K562 (cell line): ENCODE measurements at regions of chr10 and their contacts with region 1.

Region 1: DNA sequence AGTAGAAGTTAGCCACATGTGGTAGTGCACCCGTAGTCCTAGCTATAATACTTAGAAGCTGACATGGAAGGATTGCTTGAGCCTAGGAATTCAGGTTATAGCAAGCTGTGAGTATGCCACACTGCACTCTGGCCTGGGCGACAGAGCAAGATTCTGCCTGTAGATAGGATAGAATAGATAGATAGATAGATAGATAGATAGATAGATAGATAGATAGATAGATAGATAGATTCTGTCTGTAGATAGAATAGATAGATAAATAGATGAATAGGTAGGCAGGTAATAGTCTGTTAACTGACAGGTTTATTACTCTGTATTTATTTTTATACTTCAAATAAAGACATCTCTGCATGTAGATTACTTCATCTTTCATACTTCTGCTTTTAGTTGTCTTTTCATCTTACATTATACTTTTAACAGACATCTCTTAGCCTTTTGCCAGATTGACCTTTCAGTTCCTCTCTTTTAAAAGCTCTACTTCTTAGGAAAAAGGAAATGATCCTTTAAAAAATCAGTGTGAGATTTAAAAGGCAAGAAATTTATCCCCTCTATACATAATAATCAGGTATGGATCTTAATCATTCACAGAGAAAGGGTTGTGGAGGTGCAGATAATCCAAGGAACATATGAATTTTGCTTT is 31.8 kb downstream of the CCAR1 start:
- DNase-seq: no peak
- ATAC-seq: no peak
- H3K4me3 ChIP-seq: no peak overlapping the region
- H3K27ac ChIP-seq: no peak overlapping the region
- H3K4me1 ChIP-seq: no peaks in the 10 kb centered on the region
- H3K27me3 ChIP-seq: no peaks in the 10 kb centered on the region
- CTCF ChIP-seq: no peak
- EP300 ChIP-seq: no peak
- POLR2A ChIP-seq: no peak
- RAD21 ChIP-seq: no peak

Region 2: GRCh38 chr10:68973975-68974374 is 221.1 kb after region 1 on chr10:
- CTCF ChIA-PET with region 1: no interaction called
- POLR2A ChIA-PET with region 1: no interaction called
- in situ Hi-C with region 1: no loop called
- intact Hi-C with region 1: loop called (anchors 10 kb)
- DNase-seq: no peak
- ATAC-seq: no peak
- H3K4me3 ChIP-seq: no peak overlapping the region
- H3K27ac ChIP-seq: no peak overlapping the region
- H3K4me1 ChIP-seq: no peaks in the 10 kb centered on the region
- H3K27me3 ChIP-seq: no peaks in the 10 kb centered on the region
- CTCF ChIP-seq: no peak
- EP300 ChIP-seq: no peak
- POLR2A ChIP-seq: 0 out of 2 replicates have a peak, but pooled peaks have one; percentile 39
- RAD21 ChIP-seq: no peak